ENCODE measurements at regions of chr1 and their contacts with region 1.

Region 1: GRCh38 chr1:74468982-74469603 is 43.3 kb downstream of the LRRC53 start:
- DNase-seq: peak; percentile 59
- H3K4me3 Mint-ChIP-seq: no peak overlapping the region
- H3K27ac Mint-ChIP-seq: no peak overlapping the region
- H3K4me1 Mint-ChIP-seq: peaks cover 10% of the 10 kb centered on the region
- H3K27me3 Mint-ChIP-seq: peaks cover 18% of the 10 kb centered on the region
- CTCF ChIP-seq: peak; percentile 67

Region 2: DNA sequence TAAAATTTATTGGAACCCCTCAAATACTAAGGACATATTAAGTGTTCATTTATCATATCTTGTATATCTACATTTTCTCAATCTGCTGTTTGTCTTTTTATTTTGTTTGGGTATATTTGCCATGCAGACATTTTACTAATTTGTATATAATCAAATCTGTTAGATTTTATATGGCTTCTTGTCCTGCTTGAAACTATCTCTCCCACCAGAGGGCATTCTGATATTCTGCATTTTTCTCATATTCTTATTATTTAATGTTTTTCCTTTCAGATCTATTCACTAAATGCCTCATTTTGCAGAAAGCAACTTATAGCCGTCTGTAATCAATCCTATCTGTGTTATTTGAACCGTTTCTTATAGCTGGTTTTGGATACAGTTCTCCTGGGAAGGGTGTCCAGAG is 1016.6 kb before region 1 on chr1:
- CTCF ChIA-PET with region 1: no interaction called
- POLR2A ChIA-PET with region 1: no interaction called
- intact Hi-C with region 1: loop called (anchors 5 kb)
- DNase-seq: no peak
- H3K4me3 Mint-ChIP-seq: no peak overlapping the region
- H3K27ac Mint-ChIP-seq: no peak overlapping the region
- H3K4me1 Mint-ChIP-seq: no peaks in the 10 kb centered on the region
- H3K27me3 Mint-ChIP-seq: no peaks in the 10 kb centered on the region
- CTCF ChIP-seq: no peak

Region 3: GRCh38 chr1:73839922-73840321 is 629.2 kb before region 1 on chr1:
- CTCF ChIA-PET with region 1: interaction called, 7 read pairs
- POLR2A ChIA-PET with region 1: no interaction called
- intact Hi-C with region 1: loop called (anchors 2 kb)
- DNase-seq: peak; percentile 49
- H3K4me3 Mint-ChIP-seq: no peak overlapping the region
- H3K27ac Mint-ChIP-seq: no peak overlapping the region
- H3K4me1 Mint-ChIP-seq: no peaks in the 10 kb centered on the region
- H3K27me3 Mint-ChIP-seq: no peaks in the 10 kb centered on the region
- CTCF ChIP-seq: peak; percentile 46

Region 4: DNA sequence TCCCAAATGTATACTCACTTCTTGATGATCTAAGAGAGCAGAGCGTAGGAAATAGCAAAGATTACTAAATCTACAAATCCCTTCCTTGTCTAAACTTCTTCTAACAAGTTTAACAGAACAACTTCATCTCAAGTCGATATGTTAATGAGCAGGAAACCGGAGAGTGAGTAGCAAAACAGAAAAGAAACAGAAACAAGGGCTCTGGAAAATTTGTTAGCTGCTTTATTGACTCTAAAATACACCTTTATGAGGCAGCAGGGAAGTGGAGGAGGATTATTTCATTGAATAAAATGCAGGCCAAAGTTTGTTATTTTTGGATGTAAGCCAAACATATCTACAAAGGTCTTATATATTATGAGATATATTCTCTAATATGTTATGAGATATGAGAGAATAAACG is 463.6 kb before region 1 on chr1:
- CTCF ChIA-PET with region 1: interaction called, 3 read pairs
- POLR2A ChIA-PET with region 1: no interaction called
- intact Hi-C with region 1: loop called (anchors 10 kb)
- DNase-seq: no peak
- H3K4me3 Mint-ChIP-seq: no peak overlapping the region
- H3K27ac Mint-ChIP-seq: no peak overlapping the region
- H3K4me1 Mint-ChIP-seq: peaks cover 5% of the 10 kb centered on the region
- H3K27me3 Mint-ChIP-seq: no peaks in the 10 kb centered on the region
- CTCF ChIP-seq: no peak

Region 5: GRCh38 chr1:74422421-74423292 is 46.4 kb before region 1 on chr1:
- CTCF ChIA-PET with region 1: no interaction called
- POLR2A ChIA-PET with region 1: no interaction called
- intact Hi-C with region 1: no loop called
- DNase-seq: no peak
- H3K4me3 Mint-ChIP-seq: no peak overlapping the region
- H3K27ac Mint-ChIP-seq: no peak overlapping the region
- H3K4me1 Mint-ChIP-seq: no peaks in the 10 kb centered on the region
- H3K27me3 Mint-ChIP-seq: peaks cover 19% of the 10 kb centered on the region
- CTCF ChIP-seq: no peak